ENCODE measurements at regions of chr14 and their contacts with region 1.

Region 1: GRCh38 chr14:57317316-57317715 is 48.5 kb downstream of the AP5M1 start:
- DNase-seq: peak; percentile 82
- H3K4me3 ChIP-seq: no peak overlapping the region
- H3K27ac ChIP-seq: no peak overlapping the region
- H3K4me1 ChIP-seq: no peaks in the 10 kb centered on the region
- H3K27me3 ChIP-seq: peaks cover 11 to 12% of the 10 kb centered on the region in 2 experiments
- CTCF ChIP-seq: peak; percentile 70 to 83
- POLR2A ChIP-seq: no peak

Region 2: GRCh38 chr14:56555921-56556570 is 761.3 kb before region 1 on chr14:
- CTCF ChIA-PET with region 1: interaction called, 9 read pairs
- POLR2A ChIA-PET with region 1: no interaction called
- dilution Hi-C with region 1: no loop called
- intact Hi-C with region 1: loop called (anchors 1 kb)
- DNase-seq: peak; percentile 46
- H3K4me3 ChIP-seq: no peak overlapping the region
- H3K27ac ChIP-seq: no peak overlapping the region
- H3K4me1 ChIP-seq: no peaks in the 10 kb centered on the region
- H3K27me3 ChIP-seq: peaks cover 5 to 14% of the 10 kb centered on the region in 2 experiments
- CTCF ChIP-seq: peak; percentile 16 to 43
- POLR2A ChIP-seq: no peak

Region 3: DNA sequence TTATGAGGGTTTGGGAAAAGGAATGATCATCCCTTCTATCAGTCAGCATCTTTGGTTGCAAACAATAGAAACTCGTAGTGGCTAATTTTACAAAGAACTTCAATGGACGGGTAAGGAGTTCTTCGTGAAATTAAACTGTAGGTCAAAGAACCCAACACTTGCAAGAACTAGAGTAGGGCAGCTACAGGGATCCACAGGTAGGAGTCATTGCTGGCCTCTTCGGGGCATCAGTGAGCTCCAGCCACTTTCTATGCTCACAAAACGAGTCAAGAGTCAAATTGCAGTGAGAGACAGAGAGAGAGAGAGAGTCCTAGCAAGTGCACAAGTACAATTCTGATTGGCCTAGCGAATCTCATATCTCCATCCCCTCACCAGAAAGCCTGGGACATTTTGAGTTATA is 477.1 kb before region 1 on chr14:
- CTCF ChIA-PET with region 1: no interaction called
- POLR2A ChIA-PET with region 1: no interaction called
- dilution Hi-C with region 1: no loop called
- intact Hi-C with region 1: no loop called
- DNase-seq: no peak
- H3K4me3 ChIP-seq: no peak overlapping the region
- H3K27ac ChIP-seq: no peak overlapping the region
- H3K4me1 ChIP-seq: no peaks in the 10 kb centered on the region
- H3K27me3 ChIP-seq: no peaks in the 10 kb centered on the region
- CTCF ChIP-seq: no peak
- POLR2A ChIP-seq: no peak

Region 4: DNA sequence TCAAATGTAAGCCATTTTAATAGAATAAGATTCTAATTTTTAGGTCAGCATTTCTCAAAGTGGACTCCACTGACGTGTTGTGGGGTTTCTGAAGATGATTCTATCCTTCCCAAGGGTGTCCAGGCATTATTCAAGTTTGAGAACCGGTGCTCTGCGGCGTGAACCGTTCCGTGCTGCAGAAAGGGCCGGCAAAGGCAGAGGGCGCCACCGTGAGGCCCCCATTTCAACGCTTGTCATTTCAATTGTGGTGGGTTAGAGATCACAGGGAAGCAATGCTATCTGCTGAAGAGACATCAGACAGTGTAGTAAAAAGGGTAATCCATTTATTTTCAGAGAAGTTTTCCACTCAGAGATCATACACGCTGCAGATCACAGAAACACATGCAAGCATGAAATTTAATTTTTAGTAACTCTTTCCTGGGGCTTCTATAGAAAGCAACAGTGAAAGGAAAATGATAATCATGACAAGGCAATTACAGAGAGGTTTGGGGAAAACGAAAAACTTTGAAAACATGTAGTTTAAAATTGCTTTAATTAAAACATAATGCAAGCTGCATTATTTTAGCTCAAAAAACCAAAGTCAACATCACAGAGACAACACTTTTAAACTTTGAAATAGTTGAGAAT is 250.3 kb before region 1 on chr14:
- CTCF ChIA-PET with region 1: interaction called, 4 read pairs
- POLR2A ChIA-PET with region 1: no interaction called
- dilution Hi-C with region 1: no loop called
- intact Hi-C with region 1: loop called (anchors 1 kb)
- DNase-seq: peak; percentile 37
- H3K4me3 ChIP-seq: no peak overlapping the region
- H3K27ac ChIP-seq: no peak overlapping the region
- H3K4me1 ChIP-seq: no peaks in the 10 kb centered on the region
- H3K27me3 ChIP-seq: peaks cover 4 to 17% of the 10 kb centered on the region in 2 experiments
- CTCF ChIP-seq: peak; percentile 57 to 68
- POLR2A ChIP-seq: no peak

Region 5: DNA sequence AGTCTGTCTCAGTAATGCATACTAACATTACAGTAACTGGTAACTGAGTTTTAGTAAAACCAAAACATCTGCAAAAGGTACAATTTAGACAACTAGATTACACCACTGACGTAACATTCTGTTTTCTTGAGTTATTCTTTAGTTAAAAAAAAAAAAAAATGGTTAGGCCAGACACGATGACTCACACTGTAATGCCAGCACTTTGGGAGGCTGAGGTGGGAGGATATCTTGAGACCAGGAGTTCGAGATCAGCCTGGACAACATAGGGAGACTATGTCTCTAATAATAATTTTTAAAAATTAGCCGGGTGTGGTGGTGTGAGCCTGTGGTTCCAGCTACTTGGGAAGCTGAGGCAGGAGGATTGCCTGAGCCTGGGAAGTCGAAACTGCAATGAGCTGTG is 14.4 kb before region 1 on chr14:
- CTCF ChIA-PET with region 1: interaction called, 10 read pairs
- POLR2A ChIA-PET with region 1: no interaction called
- dilution Hi-C with region 1: no loop called
- intact Hi-C with region 1: no loop called
- DNase-seq: no peak
- H3K4me3 ChIP-seq: no peak overlapping the region
- H3K27ac ChIP-seq: no peak overlapping the region
- H3K4me1 ChIP-seq: no peaks in the 10 kb centered on the region
- H3K27me3 ChIP-seq: peaks cover 7 to 24% of the 10 kb centered on the region in 2 experiments
- CTCF ChIP-seq: no peak
- POLR2A ChIP-seq: no peak

Region 6: DNA sequence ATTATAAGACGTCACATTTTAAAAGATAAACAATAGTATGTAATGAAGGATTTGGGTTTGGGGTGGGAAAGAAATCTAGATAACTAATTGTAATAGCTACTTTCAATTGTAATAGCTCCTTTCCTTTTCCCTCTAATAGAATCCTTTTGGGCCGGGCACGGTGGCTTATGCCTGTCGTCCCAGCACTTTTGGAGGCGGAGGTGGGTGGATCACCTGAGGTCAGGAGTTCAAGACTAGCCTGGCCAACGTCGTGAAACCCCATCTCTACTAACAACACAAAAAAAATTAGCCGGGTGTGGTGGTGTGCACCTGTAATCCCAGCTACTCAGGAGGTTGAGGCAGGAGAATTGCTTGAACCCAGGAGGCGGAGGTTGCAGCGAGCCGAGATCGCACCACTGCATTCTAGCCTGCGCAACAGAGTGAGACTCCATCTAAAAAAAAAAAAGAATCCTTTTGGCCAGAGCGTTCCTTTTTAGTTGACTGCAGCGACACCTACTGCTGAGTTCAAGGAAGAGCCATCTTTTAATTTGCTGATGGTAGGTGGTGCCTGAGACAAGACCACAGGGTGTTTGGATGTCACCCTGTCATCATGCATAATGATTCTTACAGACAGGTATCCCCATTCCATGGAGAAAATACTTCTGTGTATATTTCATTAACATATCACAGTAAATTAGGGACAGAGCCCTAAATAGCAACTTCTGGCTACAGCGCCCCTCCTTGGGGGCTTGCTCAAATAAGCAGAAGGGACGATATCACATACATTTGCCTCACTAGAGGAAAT is 755.2 kb after region 1 on chr14:
- CTCF ChIA-PET with region 1: no interaction called
- POLR2A ChIA-PET with region 1: no interaction called
- dilution Hi-C with region 1: no loop called
- intact Hi-C with region 1: loop called (anchors 5 kb)
- DNase-seq: peak; percentile 68
- H3K4me3 ChIP-seq: no peak overlapping the region
- H3K27ac ChIP-seq: no peak overlapping the region
- H3K4me1 ChIP-seq: no peaks in the 10 kb centered on the region
- H3K27me3 ChIP-seq: peaks cover 8 to 14% of the 10 kb centered on the region in 2 experiments
- CTCF ChIP-seq: peak; percentile 50 to 67
- POLR2A ChIP-seq: no peak

Measured in endothelial cell of umbilical vein (primary cell).